ENCODE measurements at regions of chr10 and their contacts with region 1.

Region 1: DNA sequence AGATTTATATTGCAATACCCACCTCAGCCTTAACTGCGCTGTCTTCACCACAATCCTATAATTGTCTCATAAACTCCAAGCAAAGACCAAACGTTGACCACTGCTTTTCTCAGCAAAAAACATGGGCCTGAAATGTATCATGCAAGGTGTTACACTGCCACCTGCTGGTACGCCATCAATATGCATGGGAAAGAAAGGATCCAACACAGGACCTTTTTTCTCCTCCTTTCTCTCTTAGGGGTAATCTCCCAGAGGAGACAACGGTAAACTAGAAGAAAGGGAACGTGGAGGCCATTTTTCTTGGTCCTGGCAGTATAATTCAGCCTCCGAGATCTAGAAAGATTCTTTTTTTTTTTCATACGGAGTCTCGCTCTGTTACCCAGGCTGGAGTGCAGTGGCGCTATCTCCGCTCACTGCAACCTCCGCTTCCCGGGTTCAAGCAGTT is 79.1 kb upstream of the MPP7 start:
- DNase-seq: peak; percentile 88
- ATAC-seq: peak; percentile 94
- H3K4me3 ChIP-seq: no peak overlapping the region
- H3K4me3 Mint-ChIP-seq: no peak overlapping the region
- H3K27ac ChIP-seq: no peak overlapping the region
- H3K27ac Mint-ChIP-seq: no peak overlapping the region
- H3K4me1 ChIP-seq: peaks cover 0 to 5% of the 10 kb centered on the region in 2 donors
- H3K4me1 Mint-ChIP-seq: peaks cover 3% of the 10 kb centered on the region
- H3K27me3 ChIP-seq: peaks cover 0 to 2% (median 0%) of the 10 kb centered on the region in 4 experiments
- H3K27me3 Mint-ChIP-seq: peaks cover 18% of the 10 kb centered on the region
- CTCF ChIP-seq: peak; percentile 98

Region 2: DNA sequence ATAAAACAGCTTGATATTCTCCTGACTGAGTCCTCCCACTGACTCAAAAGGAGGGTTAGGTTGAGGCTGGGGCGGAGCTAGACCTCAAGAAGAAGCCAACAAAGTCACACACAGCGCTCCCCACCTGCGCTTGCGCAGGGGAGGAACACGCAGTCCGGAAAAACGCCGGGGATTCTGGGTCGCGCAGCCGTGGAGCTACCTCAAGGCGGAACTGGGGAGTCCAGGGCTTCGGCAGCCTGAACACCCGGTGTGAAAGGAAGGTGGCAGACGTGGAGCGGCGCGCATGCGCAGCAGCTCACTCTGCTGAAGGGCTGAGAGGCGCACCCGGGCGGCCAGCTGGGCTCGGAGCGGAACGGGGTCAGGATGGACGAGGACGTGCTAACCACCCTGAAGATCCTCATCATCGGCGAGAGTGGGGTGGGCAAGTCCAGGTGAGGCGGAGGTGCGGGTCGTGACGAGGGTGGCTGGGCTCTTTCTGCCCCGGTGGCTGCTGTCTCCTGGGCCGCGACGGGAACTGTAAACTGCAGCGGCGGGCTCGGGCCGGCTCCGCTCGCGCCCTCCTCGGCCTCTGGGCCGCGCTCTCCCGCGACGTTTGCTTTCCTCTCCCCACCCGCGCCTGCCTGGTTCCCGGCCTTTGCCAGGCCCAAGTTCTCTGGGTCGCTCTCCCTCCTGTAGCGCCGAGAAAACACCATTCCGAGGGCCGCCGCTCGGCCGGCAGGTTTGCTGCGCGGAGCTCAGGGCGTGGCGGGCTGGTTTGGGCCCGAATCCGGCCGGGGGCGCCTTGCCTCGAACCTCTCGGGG is 877.7 kb before region 1 on chr10 and contains the start of gene RAB18:
- CTCF ChIA-PET with region 1: no interaction called
- POLR2A ChIA-PET with region 1: no interaction called
- intact Hi-C with region 1: loop called (anchors 1 kb)
- DNase-seq: peak; percentile 98
- ATAC-seq: peak; percentile 95
- H3K4me3 ChIP-seq: peak within 1 kb of the TSS; percentile 68 to 91 (median 86)
- H3K4me3 Mint-ChIP-seq: peak within 1 kb of the TSS; percentile 100
- H3K27ac ChIP-seq: peak within 1 kb of the TSS; percentile 87 to 88
- H3K27ac Mint-ChIP-seq: peak within 1 kb of the TSS; percentile 100
- H3K4me1 ChIP-seq: peaks cover 13 to 18% of the 10 kb centered on the region in 2 donors
- H3K4me1 Mint-ChIP-seq: peaks cover 41% of the 10 kb centered on the region
- H3K27me3 ChIP-seq: peaks cover 0 to 15% (median 2%) of the 10 kb centered on the region in 4 experiments
- H3K27me3 Mint-ChIP-seq: peaks cover 4% of the 10 kb centered on the region
- CTCF ChIP-seq: no peak
- total RNA-seq, gene RAB18: 56.5 and 60.5 TPM in 2 replicates

Region 3: DNA sequence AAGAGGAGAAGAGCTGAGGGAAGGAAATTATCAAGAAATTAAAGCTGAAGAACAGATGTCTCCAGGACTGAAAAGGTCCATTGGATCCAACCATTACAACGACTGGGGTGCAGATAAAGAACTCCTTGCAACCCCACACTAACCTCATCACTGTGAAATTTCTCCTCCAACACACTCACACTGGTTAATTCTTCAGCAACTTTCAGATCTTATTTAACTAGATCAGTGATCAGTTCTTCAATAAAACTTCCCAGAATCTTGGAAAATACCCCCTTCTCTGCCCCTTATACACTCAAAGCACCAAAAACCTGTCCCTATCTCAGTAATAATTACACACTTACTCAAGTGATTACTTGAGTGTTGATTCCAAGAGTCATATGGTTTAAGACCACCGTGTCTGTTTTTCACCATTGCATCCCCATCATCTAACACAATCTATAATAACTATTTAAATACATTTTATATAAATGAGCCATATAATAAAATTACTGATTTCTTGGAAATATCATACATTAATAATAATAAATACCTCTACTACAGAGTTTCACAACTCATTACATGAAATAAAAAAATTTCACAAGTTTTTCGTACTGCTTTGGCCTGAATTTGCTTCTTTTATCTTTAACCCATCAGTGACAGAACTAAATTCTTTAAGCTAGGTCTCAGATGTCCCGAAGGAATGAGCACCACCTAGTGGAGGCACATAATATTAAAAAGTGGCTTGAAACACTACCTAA is 202.8 kb before region 1 on chr10:
- CTCF ChIA-PET with region 1: interaction called, 3 read pairs
- POLR2A ChIA-PET with region 1: no interaction called
- intact Hi-C with region 1: loop called (anchors 5 kb)
- DNase-seq: peak; percentile 57
- ATAC-seq: no peak
- H3K4me3 ChIP-seq: peak overlapping the region in 1 of 5 experiments; percentile 34
- H3K4me3 Mint-ChIP-seq: no peak overlapping the region
- H3K27ac ChIP-seq: no peak overlapping the region
- H3K27ac Mint-ChIP-seq: no peak overlapping the region
- H3K4me1 ChIP-seq: peaks cover 7 to 14% of the 10 kb centered on the region in 2 donors
- H3K4me1 Mint-ChIP-seq: peaks cover 15% of the 10 kb centered on the region
- H3K27me3 ChIP-seq: no peaks in the 10 kb centered on the region
- H3K27me3 Mint-ChIP-seq: no peaks in the 10 kb centered on the region
- CTCF ChIP-seq: peak; percentile 93

Region 4: DNA sequence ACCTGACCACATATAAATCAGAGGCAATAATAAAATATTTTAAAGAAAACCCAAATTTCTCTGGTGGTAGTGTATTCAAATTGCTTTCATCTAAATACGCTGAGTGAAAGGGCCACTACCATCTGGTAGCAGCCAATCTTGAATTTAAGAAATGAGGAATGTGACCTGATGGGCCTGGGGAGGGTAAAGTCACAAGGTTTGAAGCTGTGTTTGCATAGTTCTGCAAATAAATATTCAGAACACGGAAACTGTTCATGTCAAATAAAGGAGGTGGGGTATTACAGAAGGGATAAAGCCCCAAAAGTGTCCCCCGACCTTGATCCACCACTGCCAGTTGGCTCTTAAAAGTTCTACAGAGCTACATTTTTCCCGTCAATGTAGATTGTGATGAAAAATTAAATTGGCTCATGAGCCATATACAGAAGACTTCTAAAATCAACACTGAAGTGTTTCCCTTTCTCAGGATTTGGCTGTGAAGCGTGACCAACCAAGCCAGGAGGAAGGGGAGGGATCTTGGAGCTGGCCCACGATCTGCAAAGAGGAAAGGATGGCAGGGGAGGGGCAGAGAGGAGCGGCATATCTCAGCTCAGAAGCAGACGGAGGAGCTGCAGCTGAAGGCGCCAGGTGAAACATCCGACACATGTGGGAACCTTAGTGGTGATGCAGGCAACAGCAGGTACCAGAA is 118.6 kb before region 1 on chr10:
- CTCF ChIA-PET with region 1: interaction called, 14 read pairs
- POLR2A ChIA-PET with region 1: no interaction called
- intact Hi-C with region 1: no loop called
- DNase-seq: no peak
- ATAC-seq: no peak
- H3K4me3 ChIP-seq: no peak overlapping the region
- H3K4me3 Mint-ChIP-seq: no peak overlapping the region
- H3K27ac ChIP-seq: no peak overlapping the region
- H3K27ac Mint-ChIP-seq: no peak overlapping the region
- H3K4me1 ChIP-seq: peaks cover 25 to 26% of the 10 kb centered on the region in 2 donors
- H3K4me1 Mint-ChIP-seq: peaks cover 37% of the 10 kb centered on the region
- H3K27me3 ChIP-seq: no peaks in the 10 kb centered on the region
- H3K27me3 Mint-ChIP-seq: no peaks in the 10 kb centered on the region
- CTCF ChIP-seq: no peak

Region 5: GRCh38 chr10:28334296-28334695 is 47.6 kb before region 1 on chr10:
- CTCF ChIA-PET with region 1: interaction called, 6 read pairs
- POLR2A ChIA-PET with region 1: no interaction called
- intact Hi-C with region 1: loop called (anchors 1 kb)
- DNase-seq: peak; percentile 90
- ATAC-seq: peak; percentile 69
- H3K4me3 ChIP-seq: peak overlapping the region in 4 of 5 experiments; percentile 4 to 40 (median 24)
- H3K4me3 Mint-ChIP-seq: peak overlapping the region; percentile 89
- H3K27ac ChIP-seq: peak overlapping the region; percentile 74 to 97
- H3K27ac Mint-ChIP-seq: peak overlapping the region; percentile 97
- H3K4me1 ChIP-seq: peaks cover 26 to 33% of the 10 kb centered on the region in 2 donors
- H3K4me1 Mint-ChIP-seq: peaks cover 35% of the 10 kb centered on the region
- H3K27me3 ChIP-seq: no peaks in the 10 kb centered on the region
- H3K27me3 Mint-ChIP-seq: peaks cover 4% of the 10 kb centered on the region
- CTCF ChIP-seq: no peak

Region 6: DNA sequence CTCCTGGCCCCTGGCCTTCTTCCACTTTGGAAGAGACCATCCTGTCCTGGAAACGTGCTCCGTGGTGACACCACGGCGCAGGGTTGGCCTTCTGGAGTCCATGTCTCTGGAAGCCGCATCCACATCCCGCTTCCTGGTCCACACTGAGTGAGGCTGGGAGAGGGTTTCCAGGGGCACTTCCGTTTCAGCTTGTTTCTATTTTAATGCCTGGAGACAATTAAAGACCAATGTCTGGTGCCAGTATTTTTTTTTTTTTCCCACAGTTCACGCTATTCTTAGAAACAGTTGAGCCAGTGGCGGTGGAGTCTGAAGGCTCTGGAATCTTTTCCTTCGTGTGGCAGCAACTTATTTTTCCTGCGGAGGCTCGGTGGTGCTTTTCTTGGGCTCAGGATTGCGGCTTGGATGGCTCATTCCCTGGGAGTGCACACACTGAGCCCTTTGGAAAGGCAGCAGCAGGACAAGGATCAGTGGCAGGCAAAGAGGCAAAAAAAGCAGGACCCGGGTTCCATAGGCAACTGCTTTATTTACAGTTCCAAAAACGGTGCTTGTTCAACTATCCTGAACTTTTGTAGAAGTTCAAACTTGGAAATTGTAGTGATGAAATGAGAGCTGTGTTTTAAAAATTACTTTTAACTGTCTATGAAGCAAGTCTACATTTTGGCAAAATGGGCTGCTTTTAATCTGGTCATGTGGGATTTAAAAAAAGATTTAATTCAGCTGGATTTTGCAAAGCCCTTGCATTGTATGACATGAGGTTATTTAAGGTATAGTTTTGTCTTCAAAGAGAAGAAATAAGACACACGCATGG is 498.2 kb after region 1 on chr10:
- CTCF ChIA-PET with region 1: no interaction called
- POLR2A ChIA-PET with region 1: no interaction called
- intact Hi-C with region 1: no loop called
- DNase-seq: no peak
- ATAC-seq: no peak
- H3K4me3 ChIP-seq: no peak overlapping the region
- H3K4me3 Mint-ChIP-seq: no peak overlapping the region
- H3K27ac ChIP-seq: no peak overlapping the region
- H3K27ac Mint-ChIP-seq: no peak overlapping the region
- H3K4me1 ChIP-seq: no peaks in the 10 kb centered on the region
- H3K4me1 Mint-ChIP-seq: no peaks in the 10 kb centered on the region
- H3K27me3 ChIP-seq: no peaks in the 10 kb centered on the region
- H3K27me3 Mint-ChIP-seq: no peaks in the 10 kb centered on the region
- CTCF ChIP-seq: no peak

Measured in B cell (primary cell).